PC-3 (cell line): ENCODE measurements at regions of chr4 and their contacts with region 1.

Region 1: GRCh38 chr4:26031704-26032103 is 117.7 kb downstream of the SMIM20 start:
- DNase-seq: peak; percentile 37
- ATAC-seq: peak; percentile 51; the same call in 1 of the 2 replicates
- H3K4me3 ChIP-seq: no peak overlapping the region
- H3K27ac ChIP-seq: peak overlapping the region; percentile 74
- H3K4me1 ChIP-seq: peaks cover 20% of the 10 kb centered on the region
- H3K27me3 ChIP-seq: no peaks in the 10 kb centered on the region
- CTCF ChIP-seq: no peak

Region 2: GRCh38 chr4:26124753-26125321 is 93.1 kb after region 1 on chr4:
- CTCF ChIA-PET with region 1: no interaction called
- POLR2A ChIA-PET with region 1: no interaction called
- intact Hi-C with region 1: no loop called
- DNase-seq: peak; percentile 46
- ATAC-seq: peak; percentile 50
- H3K4me3 ChIP-seq: peak overlapping the region; percentile 30; the same call in 1 of the 2 replicates
- H3K27ac ChIP-seq: peak overlapping the region; percentile 25
- H3K4me1 ChIP-seq: peaks cover 35% of the 10 kb centered on the region
- H3K27me3 ChIP-seq: no peaks in the 10 kb centered on the region
- CTCF ChIP-seq: no peak

Region 3: DNA sequence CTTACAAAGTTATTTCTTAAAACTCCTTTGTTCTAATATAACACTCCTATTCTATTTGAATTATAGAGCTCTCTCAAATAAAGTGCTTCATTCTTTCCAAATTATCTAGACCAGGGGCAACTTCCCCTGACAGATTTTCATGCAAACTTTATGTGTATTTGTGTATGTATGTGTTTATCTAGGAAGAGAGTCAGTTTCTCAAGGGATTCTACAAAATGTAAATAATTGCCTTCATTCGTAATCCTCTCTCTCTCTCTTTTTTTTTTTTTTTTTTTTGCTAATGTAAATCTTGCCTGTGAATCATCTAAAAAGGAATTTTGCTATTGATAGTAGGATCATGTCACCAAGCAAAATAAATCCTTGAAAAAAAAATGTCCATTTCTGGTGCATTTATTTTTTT is 250.2 kb after region 1 on chr4:
- CTCF ChIA-PET with region 1: no interaction called
- POLR2A ChIA-PET with region 1: interaction called, 10 read pairs
- intact Hi-C with region 1: no loop called
- DNase-seq: peak; percentile 46
- ATAC-seq: peak; percentile 22; the same call in 1 of the 2 replicates
- H3K4me3 ChIP-seq: no peak overlapping the region
- H3K27ac ChIP-seq: peak overlapping the region; percentile 20; the same call in 1 of the 2 replicates
- H3K4me1 ChIP-seq: peaks cover 11% of the 10 kb centered on the region
- H3K27me3 ChIP-seq: no peaks in the 10 kb centered on the region
- CTCF ChIP-seq: no peak